CD8-positive, alpha-beta T cell (primary cell): ENCODE measurements at regions of chr15 and their contacts with region 1.

Region 1: DNA sequence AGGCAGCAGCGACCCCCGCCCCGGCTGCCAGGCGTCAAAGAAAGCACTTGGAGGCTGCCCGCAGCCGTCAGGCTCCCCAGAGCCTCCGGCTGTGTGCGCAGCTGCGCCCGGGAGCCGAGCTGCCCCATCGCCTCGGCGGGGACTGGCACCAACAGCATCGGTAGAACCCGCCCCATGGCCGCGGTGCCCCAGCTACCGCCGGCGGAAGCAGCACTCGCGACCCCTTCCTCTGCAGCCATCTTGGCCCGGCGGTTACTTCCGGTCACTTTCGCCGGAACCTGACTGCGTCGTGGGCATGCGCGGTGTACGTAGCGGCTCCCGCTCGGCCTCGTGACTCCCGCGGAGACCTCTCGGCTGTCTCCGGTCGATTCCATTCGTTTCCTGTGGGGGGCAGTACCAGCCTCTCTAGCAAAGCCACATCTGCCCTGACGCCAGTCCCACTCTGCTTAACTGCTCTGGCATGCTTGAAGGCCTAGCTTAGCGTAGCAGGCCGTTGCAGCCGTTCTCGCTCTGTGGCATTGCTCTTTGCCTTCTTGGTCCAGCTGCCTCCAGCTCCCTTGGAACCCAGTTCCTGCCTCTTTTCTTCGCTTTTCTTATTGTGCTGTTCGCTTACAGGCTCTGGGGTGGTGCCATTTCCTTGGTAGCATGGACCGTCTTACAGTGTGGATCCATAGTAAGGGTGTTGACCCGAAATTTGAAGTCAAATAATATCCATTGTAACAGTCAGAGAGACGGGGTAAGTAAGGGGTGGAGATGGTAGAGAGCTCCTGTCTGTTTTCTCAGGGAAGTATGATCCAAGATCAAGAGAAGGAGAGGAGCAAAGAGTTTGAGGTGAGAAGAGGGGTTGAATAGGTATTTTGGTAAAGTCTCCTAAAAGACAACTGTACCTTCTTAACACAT is at the start of gene SPG11:
- DNase-seq: peak; percentile 90 to 98 (median 96)
- ATAC-seq: peak; percentile 76
- H3K4me3 ChIP-seq: peak within 1 kb of the TSS; percentile 52 to 80
- H3K4me3 Mint-ChIP-seq: peak within 1 kb of the TSS; percentile 99
- H3K27ac ChIP-seq: peak within 1 kb of the TSS; percentile 82 to 96
- H3K27ac Mint-ChIP-seq: peak within 1 kb of the TSS; percentile 96
- H3K4me1 ChIP-seq: peaks cover 57% of the 10 kb centered on the region
- H3K4me1 Mint-ChIP-seq: peaks cover 68% of the 10 kb centered on the region
- H3K27me3 ChIP-seq: no peaks in the 10 kb centered on the region
- H3K27me3 Mint-ChIP-seq: no peaks in the 10 kb centered on the region
- CTCF ChIP-seq: peak; percentile 89
- total RNA-seq, gene SPG11: 41.9 to 42.4 TPM

Region 2: GRCh38 chr15:44426975-44427755 is 236.5 kb before region 1 on chr15 and contains the start of gene CTDSPL2:
- CTCF ChIA-PET with region 1: no interaction called
- POLR2A ChIA-PET with region 1: no interaction called
- intact Hi-C with region 1: loop called (anchors 5 to 10 kb)
- DNase-seq: peak; percentile 88 to 97 (median 93)
- ATAC-seq: peak; percentile 95
- H3K4me3 ChIP-seq: peak within 1 kb of the TSS; percentile 61 to 83
- H3K4me3 Mint-ChIP-seq: peak within 1 kb of the TSS; percentile 98
- H3K27ac ChIP-seq: peak within 1 kb of the TSS; percentile 86
- H3K27ac Mint-ChIP-seq: peak within 1 kb of the TSS; percentile 98
- H3K4me1 ChIP-seq: peaks cover 25% of the 10 kb centered on the region
- H3K4me1 Mint-ChIP-seq: peaks cover 46% of the 10 kb centered on the region
- H3K27me3 ChIP-seq: no peaks in the 10 kb centered on the region
- H3K27me3 Mint-ChIP-seq: no peaks in the 10 kb centered on the region
- CTCF ChIP-seq: no peak
- total RNA-seq, gene CTDSPL2: 103 to 104 TPM

Region 3: DNA sequence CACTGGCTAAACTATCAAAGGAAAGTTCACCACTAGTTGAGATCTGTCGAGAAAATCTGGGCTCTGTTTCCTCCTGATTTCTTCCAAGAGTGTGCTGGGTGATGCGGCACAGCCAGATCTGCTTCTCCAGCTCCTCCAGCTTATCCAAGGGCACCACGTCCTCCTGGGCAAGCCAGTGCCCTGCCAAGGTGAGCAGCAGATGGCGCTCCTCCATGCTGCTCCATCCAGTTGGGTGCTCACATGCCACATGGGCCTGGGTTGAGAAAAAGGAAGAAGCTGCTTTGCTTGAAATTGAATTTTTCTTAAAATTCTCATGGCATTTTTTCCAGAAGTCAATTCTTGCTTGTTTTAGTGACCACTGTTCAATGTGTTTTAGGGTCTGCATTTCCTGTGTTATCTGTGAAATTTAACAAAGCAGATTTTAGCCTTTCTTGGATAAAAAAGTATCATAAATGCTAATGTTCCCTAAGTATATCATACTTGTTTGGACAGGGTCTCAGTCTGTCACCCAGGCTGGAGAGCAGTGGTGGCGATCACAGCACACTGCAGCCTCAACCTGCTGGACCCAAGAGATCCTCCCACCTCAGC is 79.4 kb before region 1 on chr15:
- CTCF ChIA-PET with region 1: interaction called, 10 read pairs
- POLR2A ChIA-PET with region 1: interaction called, 6 read pairs
- intact Hi-C with region 1: no loop called
- DNase-seq: peak; percentile 27 to 74 (median 58)
- ATAC-seq: peak; percentile 86
- H3K4me3 ChIP-seq: no peak overlapping the region
- H3K4me3 Mint-ChIP-seq: no peak overlapping the region
- H3K27ac ChIP-seq: no peak overlapping the region
- H3K27ac Mint-ChIP-seq: peak overlapping the region; percentile 8
- H3K4me1 ChIP-seq: no peaks in the 10 kb centered on the region
- H3K4me1 Mint-ChIP-seq: peaks cover 16% of the 10 kb centered on the region
- H3K27me3 ChIP-seq: no peaks in the 10 kb centered on the region
- H3K27me3 Mint-ChIP-seq: no peaks in the 10 kb centered on the region
- CTCF ChIP-seq: peak; percentile 28

Region 4: GRCh38 chr15:44606740-44607139 is 56.9 kb before region 1 on chr15:
- CTCF ChIA-PET with region 1: interaction called, 6 read pairs
- POLR2A ChIA-PET with region 1: interaction called, 10 read pairs
- intact Hi-C with region 1: no loop called
- DNase-seq: no peak
- ATAC-seq: no peak
- H3K4me3 ChIP-seq: no peak overlapping the region
- H3K4me3 Mint-ChIP-seq: no peak overlapping the region
- H3K27ac ChIP-seq: no peak overlapping the region
- H3K27ac Mint-ChIP-seq: no peak overlapping the region
- H3K4me1 ChIP-seq: no peaks in the 10 kb centered on the region
- H3K4me1 Mint-ChIP-seq: no peaks in the 10 kb centered on the region
- H3K27me3 ChIP-seq: no peaks in the 10 kb centered on the region
- H3K27me3 Mint-ChIP-seq: no peaks in the 10 kb centered on the region
- CTCF ChIP-seq: no peak

Region 5: GRCh38 chr15:44676676-44677075 is 13.0 kb after region 1 on chr15:
- CTCF ChIA-PET with region 1: interaction called, 34 read pairs
- POLR2A ChIA-PET with region 1: interaction called, 174 read pairs
- intact Hi-C with region 1: loop called in 1 of 2 experiments (anchors 1 kb)
- DNase-seq: peak in 5 of 9 experiments; percentile 21 to 70 (median 41)
- ATAC-seq: peak; percentile 39
- H3K4me3 ChIP-seq: peak overlapping the region; percentile 41 to 43
- H3K4me3 Mint-ChIP-seq: peak overlapping the region; percentile 73
- H3K27ac ChIP-seq: peak overlapping the region; percentile 42 to 89
- H3K27ac Mint-ChIP-seq: peak overlapping the region; percentile 94
- H3K4me1 ChIP-seq: peaks cover 91% of the 10 kb centered on the region
- H3K4me1 Mint-ChIP-seq: peaks cover 89% of the 10 kb centered on the region
- H3K27me3 ChIP-seq: no peaks in the 10 kb centered on the region
- H3K27me3 Mint-ChIP-seq: no peaks in the 10 kb centered on the region
- CTCF ChIP-seq: no peak

Region 6: GRCh38 chr15:44692659-44693058 is 29.0 kb after region 1 on chr15:
- CTCF ChIA-PET with region 1: interaction called, 21 read pairs
- POLR2A ChIA-PET with region 1: interaction called, 30 read pairs
- intact Hi-C with region 1: no loop called
- DNase-seq: no peak
- ATAC-seq: no peak
- H3K4me3 ChIP-seq: no peak overlapping the region
- H3K4me3 Mint-ChIP-seq: no peak overlapping the region
- H3K27ac ChIP-seq: no peak overlapping the region
- H3K27ac Mint-ChIP-seq: no peak overlapping the region
- H3K4me1 ChIP-seq: peaks cover 6% of the 10 kb centered on the region
- H3K4me1 Mint-ChIP-seq: peaks cover 55% of the 10 kb centered on the region
- H3K27me3 ChIP-seq: no peaks in the 10 kb centered on the region
- H3K27me3 Mint-ChIP-seq: no peaks in the 10 kb centered on the region
- CTCF ChIP-seq: no peak

Region 7: GRCh38 chr15:44728576-44729407 is 65.1 kb after region 1 on chr15:
- CTCF ChIA-PET with region 1: interaction called, 282 read pairs
- POLR2A ChIA-PET with region 1: interaction called, 1,993 read pairs
- intact Hi-C with region 1: loop called (anchors 1 kb)
- DNase-seq: peak; percentile 88 to 98 (median 95)
- ATAC-seq: peak; percentile 77
- H3K4me3 ChIP-seq: peak overlapping the region; percentile 84 to 95
- H3K4me3 Mint-ChIP-seq: peak overlapping the region; percentile 99
- H3K27ac ChIP-seq: peak overlapping the region; percentile 93 to 95
- H3K27ac Mint-ChIP-seq: peak overlapping the region; percentile 100
- H3K4me1 ChIP-seq: peaks cover 75% of the 10 kb centered on the region
- H3K4me1 Mint-ChIP-seq: peaks cover 80% of the 10 kb centered on the region
- H3K27me3 ChIP-seq: no peaks in the 10 kb centered on the region
- H3K27me3 Mint-ChIP-seq: no peaks in the 10 kb centered on the region
- CTCF ChIP-seq: no peak

Region 8: DNA sequence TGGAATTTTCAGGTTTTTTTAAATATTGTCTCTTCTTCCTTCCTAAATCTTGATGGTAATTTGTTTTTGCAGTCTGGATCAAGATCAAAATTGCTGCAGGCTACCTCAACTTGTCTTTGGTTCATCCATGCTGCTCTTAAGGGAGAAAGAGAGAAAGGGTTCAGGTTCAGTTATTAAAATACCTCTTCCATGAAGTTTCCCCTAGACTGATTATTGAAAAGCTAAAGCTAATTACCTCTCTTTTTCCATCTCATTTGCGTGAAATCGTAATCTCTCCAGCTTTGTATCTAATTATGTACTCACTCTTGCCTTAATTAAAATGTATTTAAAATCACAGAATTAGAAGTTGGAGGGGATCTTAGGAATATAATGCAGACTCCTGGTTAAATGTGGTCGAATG is 641.1 kb after region 1 on chr15:
- CTCF ChIA-PET with region 1: no interaction called
- POLR2A ChIA-PET with region 1: no interaction called
- intact Hi-C with region 1: no loop called
- DNase-seq: no peak
- ATAC-seq: no peak
- H3K4me3 ChIP-seq: no peak overlapping the region
- H3K4me3 Mint-ChIP-seq: no peak overlapping the region
- H3K27ac ChIP-seq: no peak overlapping the region
- H3K27ac Mint-ChIP-seq: no peak overlapping the region
- H3K4me1 ChIP-seq: no peaks in the 10 kb centered on the region
- H3K4me1 Mint-ChIP-seq: peaks cover 4% of the 10 kb centered on the region
- H3K27me3 ChIP-seq: no peaks in the 10 kb centered on the region
- H3K27me3 Mint-ChIP-seq: peaks cover 25% of the 10 kb centered on the region
- CTCF ChIP-seq: no peak